OCI-LY7 (cell line): ENCODE measurements at regions of chr6 and their contacts with region 1.

Region 1: GRCh38 chr6:138001750-138002349 is 105.4 kb downstream of the PERP start:
- DNase-seq: peak; percentile 57
- H3K4me3 ChIP-seq: no peak overlapping the region
- H3K27ac ChIP-seq: no peak overlapping the region
- H3K4me1 ChIP-seq: no peaks in the 10 kb centered on the region
- CTCF ChIP-seq: peak; percentile 99

Region 2: GRCh38 chr6:137661601-137662000 is 340.2 kb before region 1 on chr6:
- CTCF ChIA-PET with region 1: no interaction called
- POLR2A ChIA-PET with region 1: no interaction called
- intact Hi-C with region 1: loop called (anchors 5 kb)
- DNase-seq: peak; percentile 40
- H3K4me3 ChIP-seq: no peak overlapping the region
- H3K27ac ChIP-seq: no peak overlapping the region
- H3K4me1 ChIP-seq: peaks cover 4% of the 10 kb centered on the region
- CTCF ChIP-seq: peak; percentile 78

Region 3: GRCh38 chr6:138109042-138109997 is 107.5 kb after region 1 on chr6:
- CTCF ChIA-PET with region 1: no interaction called
- POLR2A ChIA-PET with region 1: no interaction called
- intact Hi-C with region 1: loop called (anchors 1 kb)
- DNase-seq: peak; percentile 62
- H3K4me3 ChIP-seq: no peak overlapping the region
- H3K27ac ChIP-seq: no peak overlapping the region
- H3K4me1 ChIP-seq: no peaks in the 10 kb centered on the region
- CTCF ChIP-seq: peak; percentile 99

Region 4: GRCh38 chr6:138403801-138404661 is 402.2 kb after region 1 on chr6 and contains the start of gene HEBP2:
- CTCF ChIA-PET with region 1: no interaction called
- POLR2A ChIA-PET with region 1: no interaction called
- intact Hi-C with region 1: loop called (anchors 10 kb)
- DNase-seq: peak; percentile 97
- H3K4me3 ChIP-seq: peak within 1 kb of the TSS; percentile 84
- H3K27ac ChIP-seq: peak within 1 kb of the TSS; percentile 43
- H3K4me1 ChIP-seq: peaks cover 20% of the 10 kb centered on the region
- CTCF ChIP-seq: peak; percentile 76
- total RNA-seq, gene HEBP2: 14.0 and 25.0 TPM in 2 replicates